Posterior vena cava (tissue), 2 donors: ENCODE measurements at regions of chr18 and their contacts with region 1.

Region 1: DNA sequence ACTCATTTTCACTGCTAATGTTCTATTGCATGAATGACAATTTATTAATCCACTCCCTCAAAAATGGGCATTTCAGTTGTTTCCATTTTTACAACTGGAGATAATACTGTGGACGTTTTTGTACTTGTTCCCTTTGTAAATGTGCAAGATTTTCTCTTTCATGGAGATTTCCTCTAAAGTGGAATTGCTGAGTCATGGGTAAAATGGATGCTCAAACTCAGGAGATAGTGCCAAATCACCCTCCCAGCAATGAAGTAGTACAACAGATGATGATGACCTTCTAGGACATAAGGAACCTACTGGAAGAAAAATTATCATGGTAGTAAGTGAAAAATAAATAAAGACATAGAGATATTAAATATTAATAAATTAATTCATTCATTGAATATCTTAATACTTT is 460.8 kb upstream of the CHST9 start:
- DNase-seq: no peak

Region 2: GRCh38 chr18:27577752-27578151 is 68.2 kb before region 1 on chr18:
- intact Hi-C with region 1: loop called in 1 of 2 experiments (anchors 2 kb)
- DNase-seq: no peak